Aorta (tissue), 5 donors: ENCODE measurements at regions of chr7 and their contacts with region 1.

Region 1: DNA sequence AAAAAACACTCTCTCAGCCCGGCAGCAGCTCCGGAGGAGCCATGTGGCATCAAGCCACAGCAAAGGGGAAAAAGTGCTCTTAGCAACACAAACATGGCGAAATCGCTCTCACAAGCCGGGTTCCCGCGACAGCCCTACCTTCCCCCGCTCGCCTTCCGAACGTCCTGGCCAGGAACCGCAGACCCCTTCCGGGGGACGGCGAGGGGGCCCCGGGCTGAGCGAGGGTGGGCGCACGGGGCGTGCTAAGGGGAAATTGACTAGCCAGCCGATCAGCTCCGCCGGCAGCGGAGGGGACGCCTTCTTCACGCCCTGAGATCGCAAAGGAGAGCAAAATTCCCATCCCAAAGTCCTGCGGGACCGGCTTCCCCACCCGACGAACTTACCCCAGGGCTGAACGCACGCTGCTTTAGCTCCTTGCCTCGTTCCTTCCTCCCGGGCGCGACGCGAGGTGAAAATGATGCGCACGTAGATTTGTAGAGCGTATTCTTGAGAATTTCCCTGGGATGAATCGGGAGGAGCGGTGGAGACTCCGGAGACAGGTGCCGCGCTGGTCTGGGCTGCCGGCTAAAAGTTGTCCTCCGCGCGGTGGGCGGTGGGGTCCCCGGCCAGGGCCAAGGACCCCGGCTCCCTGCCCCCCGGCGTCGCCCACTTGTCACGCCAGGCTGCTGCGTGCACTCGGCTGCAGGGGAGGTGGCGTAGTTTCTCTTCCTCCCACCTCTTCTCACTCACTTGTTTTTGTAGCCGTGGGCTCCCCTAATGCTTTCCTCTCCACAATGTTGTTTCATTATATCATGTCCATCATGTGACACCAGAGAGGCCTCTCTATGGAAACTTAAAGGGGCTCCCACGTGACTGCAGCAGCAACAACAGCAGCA is 220.1 kb upstream of the MKLN1 start:
- DNase-seq: peak; percentile 82 to 84
- ATAC-seq: peak; percentile 72
- H3K4me3 ChIP-seq: peak overlapping the region; percentile 87 to 95
- H3K27ac ChIP-seq: peak overlapping the region; percentile 91 to 99
- H3K4me1 ChIP-seq: peaks cover 0 to 4% of the 10 kb centered on the region in 2 donors
- H3K27me3 ChIP-seq: no peaks in the 10 kb centered on the region

Region 2: GRCh38 chr7:130896898-130897514 is 210.6 kb before region 1 on chr7:
- intact Hi-C with region 1: loop called in 1 of 2 experiments (anchors 5 kb)
- DNase-seq: peak; percentile 80 to 93
- ATAC-seq: peak; percentile 74
- H3K4me3 ChIP-seq: no peak overlapping the region
- H3K27ac ChIP-seq: peak overlapping the region in 1 of 2 donors; percentile 18
- H3K4me1 ChIP-seq: peaks cover 0 to 5% of the 10 kb centered on the region in 2 donors
- H3K27me3 ChIP-seq: no peaks in the 10 kb centered on the region

Region 3: DNA sequence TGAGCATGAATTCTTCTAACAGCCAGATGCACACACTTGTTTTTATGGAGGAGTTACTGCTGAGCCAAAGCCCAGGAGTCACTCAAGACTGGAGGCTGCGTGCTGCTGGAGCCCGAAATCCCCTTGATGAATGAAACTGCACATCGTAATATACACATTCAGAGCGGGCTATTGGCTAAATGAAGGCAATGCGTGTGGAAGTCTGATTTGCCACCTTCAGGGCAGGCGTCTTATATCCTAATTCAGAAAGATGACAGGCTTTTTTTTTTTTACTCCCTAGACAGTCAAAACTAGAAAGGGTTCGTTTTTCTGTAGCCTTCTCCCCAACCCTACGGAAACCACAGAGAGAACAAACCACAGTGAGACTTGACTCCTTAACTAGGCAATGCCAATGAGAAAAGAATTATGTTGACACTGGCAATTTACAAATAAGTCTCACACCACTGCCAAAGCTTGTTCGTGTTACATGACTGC is 146.4 kb before region 1 on chr7:
- intact Hi-C with region 1: no loop called
- DNase-seq: no peak
- ATAC-seq: no peak
- H3K4me3 ChIP-seq: no peak overlapping the region
- H3K27ac ChIP-seq: no peak overlapping the region
- H3K4me1 ChIP-seq: peaks cover 2 to 6% of the 10 kb centered on the region in 2 donors
- H3K27me3 ChIP-seq: no peaks in the 10 kb centered on the region

Region 4: GRCh38 chr7:131071786-131072504 is 35.6 kb before region 1 on chr7:
- intact Hi-C with region 1: loop called in 1 of 2 experiments (anchors 5 kb)
- DNase-seq: peak in 1 of 2 donors; percentile 58
- ATAC-seq: peak; percentile 51
- H3K4me3 ChIP-seq: no peak overlapping the region
- H3K27ac ChIP-seq: peak overlapping the region in 1 of 2 donors; percentile 40
- H3K4me1 ChIP-seq: peaks cover 6 to 7% of the 10 kb centered on the region in 2 donors
- H3K27me3 ChIP-seq: no peaks in the 10 kb centered on the region

Region 5: GRCh38 chr7:131327626-131328376 is 220.2 kb after region 1 on chr7 and contains the start of gene MKLN1:
- intact Hi-C with region 1: loop called (anchors 1 to 10 kb)
- DNase-seq: peak; percentile 95 to 97
- ATAC-seq: peak; percentile 99
- H3K4me3 ChIP-seq: peak within 1 kb of the TSS; percentile 84 to 86
- H3K27ac ChIP-seq: peak within 1 kb of the TSS; percentile 94
- H3K4me1 ChIP-seq: peaks cover 2 to 4% of the 10 kb centered on the region in 2 donors
- H3K27me3 ChIP-seq: no peaks in the 10 kb centered on the region
- total RNA-seq, gene MKLN1: 72.1 to 91.6 TPM

Region 6: GRCh38 chr7:131424219-131424822 is 316.7 kb after region 1 on chr7:
- intact Hi-C with region 1: loop called (anchors 10 kb)
- DNase-seq: no peak
- ATAC-seq: no peak
- H3K4me3 ChIP-seq: no peak overlapping the region
- H3K27ac ChIP-seq: no peak overlapping the region
- H3K4me1 ChIP-seq: no peaks in the 10 kb centered on the region
- H3K27me3 ChIP-seq: no peaks in the 10 kb centered on the region

Region 7: DNA sequence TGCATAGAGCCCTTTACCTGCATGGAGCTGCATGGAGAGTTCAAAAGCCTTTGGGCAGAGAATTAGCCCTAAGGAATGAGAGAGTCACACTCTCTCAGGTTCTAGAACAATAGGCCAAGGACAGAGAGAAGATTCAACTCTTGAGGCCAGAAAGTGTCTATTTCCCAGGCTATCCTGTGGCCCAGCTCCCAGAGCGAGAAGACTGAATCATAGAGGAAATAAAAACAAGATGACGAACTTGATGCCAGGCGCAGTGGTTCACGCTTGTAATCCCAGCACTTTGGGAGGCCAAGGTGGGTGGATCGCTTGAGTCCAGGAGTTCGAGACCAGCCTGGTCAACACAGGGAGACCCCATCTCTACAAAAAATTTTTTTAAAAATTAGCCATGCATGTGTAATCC is 467.2 kb after region 1 on chr7:
- intact Hi-C with region 1: no loop called
- DNase-seq: no peak
- ATAC-seq: no peak
- H3K4me3 ChIP-seq: no peak overlapping the region
- H3K27ac ChIP-seq: no peak overlapping the region
- H3K4me1 ChIP-seq: no peaks in the 10 kb centered on the region
- H3K27me3 ChIP-seq: no peaks in the 10 kb centered on the region